ENCODE measurements at regions of chr11 and their contacts with region 1.

Region 1: GRCh38 chr11:9265211-9266131 is at the start of gene DENND5A:
- DNase-seq: peak; percentile 76 to 90 (median 86)
- H3K4me3 ChIP-seq: peak within 1 kb of the TSS; percentile 75 to 97 (median 97)
- H3K4me3 Mint-ChIP-seq: peak within 1 kb of the TSS; percentile 93 to 99
- H3K27ac ChIP-seq: peak within 1 kb of the TSS; percentile 99 to 100
- H3K27ac Mint-ChIP-seq: peak within 1 kb of the TSS; percentile 100
- H3K4me1 ChIP-seq: peaks cover 18 to 35% of the 10 kb centered on the region in 2 donors
- H3K4me1 Mint-ChIP-seq: peaks cover 30% of the 10 kb centered on the region
- H3K27me3 ChIP-seq: no peaks in the 10 kb centered on the region
- H3K27me3 Mint-ChIP-seq: peaks cover 0 to 15% (median 7%) of the 10 kb centered on the region in 3 donors
- CTCF ChIP-seq: no peak
- polyA plus RNA-seq, gene DENND5A: 24.4 to 291 (median 37.5) TPM

Region 2: DNA sequence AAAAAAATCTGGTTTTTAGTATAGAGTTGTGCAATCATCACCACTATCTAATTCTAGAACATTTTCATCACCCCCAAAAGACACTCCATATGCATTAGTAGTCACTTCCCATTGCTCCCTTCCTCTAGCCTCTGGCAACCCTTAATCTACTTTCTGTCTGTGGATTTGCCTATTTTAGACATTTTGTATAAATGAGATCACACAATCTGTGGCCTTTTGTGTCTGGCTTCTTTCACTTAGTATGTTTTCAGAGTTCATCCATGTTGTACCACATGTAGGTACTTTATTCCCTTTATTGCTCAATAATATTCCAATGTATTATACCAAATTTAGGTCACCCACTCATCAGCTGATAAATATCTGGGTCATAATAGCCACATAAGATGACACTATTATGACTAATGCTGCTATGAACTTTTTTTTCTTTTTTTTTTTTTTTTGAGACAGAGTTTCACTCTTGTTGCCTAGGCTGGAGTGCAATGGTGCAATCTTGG is 106.5 kb before region 1 on chr11:
- intact Hi-C with region 1: loop called in 1 of 2 experiments (anchors 5 kb)
- DNase-seq: peak; percentile 46 to 79 (median 75)
- H3K4me3 ChIP-seq: no peak overlapping the region
- H3K4me3 Mint-ChIP-seq: peak overlapping the region in 1 of 2 donors; percentile 1
- H3K27ac ChIP-seq: peak overlapping the region; percentile 36 to 86
- H3K27ac Mint-ChIP-seq: peak overlapping the region; percentile 86 to 98 (median 96)
- H3K4me1 ChIP-seq: peaks cover 37 to 43% of the 10 kb centered on the region in 2 donors
- H3K4me1 Mint-ChIP-seq: peaks cover 41% of the 10 kb centered on the region
- H3K27me3 ChIP-seq: no peaks in the 10 kb centered on the region
- H3K27me3 Mint-ChIP-seq: peaks cover 0 to 3% (median 0%) of the 10 kb centered on the region in 3 donors
- CTCF ChIP-seq: no peak

Region 3: GRCh38 chr11:9363954-9364912 is 98.8 kb after region 1 on chr11:
- intact Hi-C with region 1: loop called in 1 of 2 experiments (anchors 2 kb)
- DNase-seq: peak; percentile 99
- H3K4me3 ChIP-seq: peak overlapping the region; percentile 46 to 71 (median 52)
- H3K4me3 Mint-ChIP-seq: peak overlapping the region; percentile 78 to 90
- H3K27ac ChIP-seq: peak overlapping the region; percentile 98
- H3K27ac Mint-ChIP-seq: peak overlapping the region; percentile 98 to 100 (median 99)
- H3K4me1 ChIP-seq: peaks cover 12 to 15% of the 10 kb centered on the region in 2 donors
- H3K4me1 Mint-ChIP-seq: peaks cover 18% of the 10 kb centered on the region
- H3K27me3 ChIP-seq: no peaks in the 10 kb centered on the region
- H3K27me3 Mint-ChIP-seq: peaks cover 0 to 3% (median 1%) of the 10 kb centered on the region in 3 donors
- CTCF ChIP-seq: no peak

Measured in CD14-positive monocyte (primary cell).